ENCODE measurements at regions of chr2 and their contacts with region 1.

Region 1: DNA sequence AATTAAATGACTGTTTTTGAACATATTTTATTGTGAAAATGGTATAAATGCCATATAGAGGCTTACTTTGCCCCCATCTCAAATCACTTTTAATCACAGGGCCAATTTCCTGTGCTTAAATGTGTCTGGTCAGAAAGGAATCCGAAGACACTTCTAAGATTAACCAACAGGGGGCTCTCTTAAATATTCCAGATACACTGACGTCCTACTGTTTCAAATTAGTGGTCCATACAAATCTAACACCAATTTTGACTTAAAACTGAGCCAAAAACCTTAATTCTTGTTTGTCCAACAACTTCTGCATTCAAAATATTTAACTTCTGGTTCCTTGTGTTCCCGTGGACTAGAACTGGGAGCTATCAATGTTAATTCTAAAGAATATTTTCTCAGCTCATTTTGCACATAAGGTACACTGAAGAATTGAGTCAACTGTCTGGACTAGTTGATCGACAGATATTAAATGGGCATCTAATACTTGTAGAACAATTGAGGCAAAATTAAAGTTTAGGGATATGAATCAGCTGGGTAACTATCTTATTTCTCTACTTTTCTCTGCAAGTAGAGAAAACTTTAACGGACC is 557.5 kb downstream of the ARHGAP15 start:
- DNase-seq: peak in 1 of 2 experiments; percentile 48
- H3K4me3 ChIP-seq: no peak overlapping the region
- H3K4me3 Mint-ChIP-seq: no peak overlapping the region
- H3K27ac Mint-ChIP-seq: no peak overlapping the region
- H3K4me1 ChIP-seq: peaks cover 8% of the 10 kb centered on the region; the same call in 1 of the 2 replicates
- H3K4me1 Mint-ChIP-seq: peaks cover 8% of the 10 kb centered on the region
- H3K27me3 ChIP-seq: no peaks in the 10 kb centered on the region
- H3K27me3 Mint-ChIP-seq: no peaks in the 10 kb centered on the region
- CTCF ChIP-seq: peak; percentile 27 to 41

Region 2: DNA sequence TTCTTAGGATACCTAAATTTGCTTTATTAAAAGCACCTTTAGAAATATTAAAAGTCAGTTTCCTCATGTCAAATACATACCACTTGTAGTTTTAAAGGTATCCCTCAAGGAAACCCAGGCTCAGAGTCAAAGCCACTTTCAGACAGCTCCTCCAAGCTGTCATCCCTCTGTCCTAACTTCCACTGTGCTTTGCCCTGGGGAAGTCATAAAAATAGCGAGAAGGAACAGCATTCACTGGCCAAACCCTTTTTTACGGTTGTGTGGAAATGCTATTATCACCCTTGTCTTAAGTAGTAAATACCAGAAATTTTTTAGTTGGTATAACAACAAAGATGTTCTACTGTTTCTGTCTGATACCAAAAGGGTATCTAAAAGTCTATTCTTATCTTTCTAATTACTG is 152.8 kb after region 1 on chr2:
- CTCF ChIA-PET with region 1: no interaction called
- POLR2A ChIA-PET with region 1: no interaction called
- intact Hi-C with region 1: loop called (anchors 1 kb)
- DNase-seq: peak; percentile 46 to 60
- H3K4me3 ChIP-seq: no peak overlapping the region
- H3K4me3 Mint-ChIP-seq: no peak overlapping the region
- H3K27ac Mint-ChIP-seq: no peak overlapping the region
- H3K4me1 ChIP-seq: peaks cover 14% of the 10 kb centered on the region
- H3K4me1 Mint-ChIP-seq: peaks cover 13% of the 10 kb centered on the region
- H3K27me3 ChIP-seq: no peaks in the 10 kb centered on the region
- H3K27me3 Mint-ChIP-seq: no peaks in the 10 kb centered on the region
- CTCF ChIP-seq: no peak

Region 3: DNA sequence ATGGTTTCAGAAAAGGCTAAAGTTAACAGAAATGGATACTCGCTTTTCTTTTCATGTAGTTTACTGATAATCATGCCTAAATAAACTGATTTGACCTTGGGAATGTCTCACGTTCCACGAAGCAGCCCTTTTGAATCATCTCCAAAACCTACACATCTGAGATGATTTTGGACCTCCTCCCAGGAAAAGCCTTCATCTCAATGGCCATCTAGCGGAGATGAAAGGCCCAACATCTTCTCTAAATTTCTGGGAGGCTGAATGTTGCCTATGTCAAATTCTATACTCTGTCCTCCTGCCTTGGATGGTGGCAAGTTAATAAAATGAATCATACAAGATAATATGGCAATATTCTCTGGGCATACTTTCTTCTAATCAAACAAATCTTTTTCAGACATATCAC is 384.8 kb after region 1 on chr2:
- CTCF ChIA-PET with region 1: interaction called, 6 read pairs
- POLR2A ChIA-PET with region 1: no interaction called
- intact Hi-C with region 1: loop called (anchors 2 kb)
- DNase-seq: peak in 1 of 2 experiments; percentile 4
- H3K4me3 ChIP-seq: no peak overlapping the region
- H3K4me3 Mint-ChIP-seq: no peak overlapping the region
- H3K27ac Mint-ChIP-seq: no peak overlapping the region
- H3K4me1 ChIP-seq: no peaks in the 10 kb centered on the region
- H3K4me1 Mint-ChIP-seq: no peaks in the 10 kb centered on the region
- H3K27me3 ChIP-seq: no peaks in the 10 kb centered on the region
- H3K27me3 Mint-ChIP-seq: no peaks in the 10 kb centered on the region
- CTCF ChIP-seq: peak in 1 of 2 experiments; percentile 36

Measured in Caco-2 (cell line).